Panc1 (cell line): ENCODE measurements at regions of chr3 and their contacts with region 1.

Region 1: DNA sequence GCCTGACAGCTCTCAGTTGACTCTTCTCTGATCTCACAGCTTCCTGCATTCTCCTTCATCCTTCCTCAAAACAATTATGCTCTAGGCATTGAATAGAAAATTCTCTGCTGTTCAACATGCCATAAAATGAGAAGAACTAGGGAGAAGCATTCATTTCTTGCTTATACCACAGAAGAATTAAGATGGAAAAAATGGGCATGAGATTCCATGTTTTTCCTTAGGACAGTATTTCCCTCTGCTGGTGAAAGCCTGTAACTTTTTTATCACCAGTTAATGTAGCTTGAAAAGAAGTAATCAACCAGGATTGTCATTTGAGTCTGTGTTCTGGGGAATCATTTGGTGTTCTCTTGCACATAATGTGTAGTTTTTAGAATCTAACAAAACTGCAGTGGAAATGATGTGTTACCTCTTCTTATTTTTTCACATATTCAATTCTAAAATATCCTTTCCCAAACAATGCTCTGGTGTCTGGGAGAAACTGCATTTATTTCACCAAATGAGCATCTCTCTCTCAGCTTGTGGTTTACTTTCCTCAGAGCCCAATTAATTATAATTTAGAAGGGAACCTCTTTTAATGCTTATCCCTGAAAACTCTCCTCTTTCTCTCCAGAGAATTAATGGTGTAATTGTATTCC is 92.8 kb upstream of the DCBLD2 start:
- DNase-seq: no peak
- ATAC-seq: peak; percentile 70
- H3K4me3 ChIP-seq: no peak overlapping the region
- H3K27ac ChIP-seq: no peak overlapping the region
- H3K4me1 ChIP-seq: no peaks in the 10 kb centered on the region
- H3K27me3 ChIP-seq: peaks cover 2% of the 10 kb centered on the region; the same call in 1 of the 2 replicates
- CTCF ChIP-seq: peak; percentile 62; the same call in 1 of the 2 replicates

Region 2: GRCh38 chr3:98602078-98602678 is 392.1 kb before region 1 on chr3:
- CTCF ChIA-PET with region 1: interaction called, 6 read pairs
- POLR2A ChIA-PET with region 1: no interaction called
- in situ Hi-C with region 1: no loop called
- intact Hi-C with region 1: loop called (anchors 5 kb)
- DNase-seq: peak; percentile 36
- ATAC-seq: peak; percentile 92
- H3K4me3 ChIP-seq: no peak overlapping the region
- H3K27ac ChIP-seq: no peak overlapping the region
- H3K4me1 ChIP-seq: no peaks in the 10 kb centered on the region
- H3K27me3 ChIP-seq: peaks cover 2% of the 10 kb centered on the region; the same call in 1 of the 2 replicates
- CTCF ChIP-seq: peak; percentile 81

Region 3: DNA sequence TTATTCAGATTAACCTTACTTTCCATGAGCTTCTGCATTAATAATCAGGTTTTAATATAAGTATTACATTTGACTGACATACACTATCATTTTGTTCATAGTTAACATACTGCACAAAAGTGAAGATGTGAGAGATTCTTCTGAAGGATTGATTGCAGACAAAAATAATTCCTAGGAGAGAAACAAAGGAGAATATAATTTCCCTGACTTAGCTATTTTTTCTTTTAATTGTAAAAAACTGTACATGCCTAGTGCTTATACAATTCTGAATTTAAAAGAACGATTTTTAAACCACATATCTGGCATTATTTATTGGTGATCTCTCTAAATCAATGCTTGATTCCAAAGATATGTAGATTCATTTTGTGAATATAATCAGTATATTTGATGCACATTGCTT is 81.8 kb before region 1 on chr3:
- CTCF ChIA-PET with region 1: no interaction called
- POLR2A ChIA-PET with region 1: no interaction called
- in situ Hi-C with region 1: no loop called
- intact Hi-C with region 1: no loop called
- DNase-seq: no peak
- ATAC-seq: no peak
- H3K4me3 ChIP-seq: no peak overlapping the region
- H3K27ac ChIP-seq: no peak overlapping the region
- H3K4me1 ChIP-seq: no peaks in the 10 kb centered on the region
- H3K27me3 ChIP-seq: 0 out of 2 replicates have a peak, but pooled peaks cover 2% of the 10 kb centered on the region
- CTCF ChIP-seq: no peak

Region 4: DNA sequence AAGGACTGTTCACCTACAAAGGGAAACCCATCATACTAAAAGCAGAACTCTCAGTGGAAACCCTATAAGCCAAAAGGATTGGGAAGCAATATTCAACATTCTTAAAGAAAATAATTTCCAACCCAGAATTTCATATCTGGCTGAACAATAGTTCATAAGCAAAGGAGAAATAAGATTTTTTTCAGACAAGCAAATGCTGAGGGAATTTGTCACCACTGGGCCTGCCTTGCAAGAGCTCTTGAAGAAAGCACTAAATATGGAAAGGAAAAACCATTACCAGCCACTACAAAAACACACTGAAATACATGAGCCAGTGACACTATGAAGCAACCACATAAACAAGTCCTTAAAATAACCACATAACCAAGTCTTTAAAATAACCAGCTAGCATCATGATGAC is 63.8 kb before region 1 on chr3:
- CTCF ChIA-PET with region 1: no interaction called
- POLR2A ChIA-PET with region 1: no interaction called
- in situ Hi-C with region 1: no loop called
- intact Hi-C with region 1: loop called (anchors 10 kb)
- DNase-seq: no peak
- ATAC-seq: no peak
- H3K4me3 ChIP-seq: no peak overlapping the region
- H3K27ac ChIP-seq: no peak overlapping the region
- H3K4me1 ChIP-seq: no peaks in the 10 kb centered on the region
- H3K27me3 ChIP-seq: no peaks in the 10 kb centered on the region
- CTCF ChIP-seq: no peak